PC-9 (cell line): ENCODE measurements at regions of chr10 and their contacts with region 1.

Region 1: DNA sequence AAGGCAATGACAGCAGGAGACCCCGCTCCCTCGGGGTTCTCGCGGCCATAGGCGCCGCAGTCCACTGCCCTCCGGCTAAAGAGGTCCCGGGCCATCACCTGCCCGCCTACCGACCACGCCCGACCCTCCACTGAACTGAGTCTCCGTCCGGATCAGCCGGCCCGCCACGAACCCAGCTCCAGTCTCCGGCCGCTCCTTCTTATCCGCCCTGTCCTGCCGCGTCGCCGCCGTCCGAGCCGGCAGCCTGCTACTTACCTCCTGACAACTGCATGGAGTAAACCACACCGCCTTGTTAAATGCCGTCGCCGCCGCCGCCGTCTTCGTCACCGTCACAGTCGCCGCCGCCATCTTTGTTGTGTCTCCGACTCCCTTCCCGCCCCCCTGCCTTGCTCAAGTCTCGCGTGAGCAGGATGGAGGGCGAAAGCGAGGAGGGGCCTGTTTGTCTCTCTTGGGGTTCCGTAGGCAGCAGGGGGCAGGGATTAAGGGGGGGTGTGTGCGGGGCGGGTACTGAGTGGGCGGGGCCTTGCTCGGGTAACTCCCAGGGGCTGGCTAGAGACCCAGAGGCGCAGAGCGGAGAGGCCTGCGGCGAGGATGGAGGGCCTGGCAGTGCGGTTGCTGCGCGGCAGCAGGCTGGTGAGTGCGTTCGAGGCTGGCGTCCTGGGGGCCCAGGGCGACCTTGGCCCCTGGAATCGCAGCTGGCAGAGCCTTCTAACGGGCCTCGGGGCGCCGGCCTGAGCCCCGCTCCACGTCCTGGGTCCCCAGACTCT is at the starts of genes ACADSB and IKZF5:
- DNase-seq: peak; percentile 84 to 85
- H3K4me3 ChIP-seq: peak within 1 kb of the TSS; percentile 89
- H3K27ac ChIP-seq: peak within 1 kb of the TSS; percentile 61
- H3K4me1 ChIP-seq: peaks cover 16% of the 10 kb centered on the region
- H3K27me3 ChIP-seq: no peaks in the 10 kb centered on the region
- CTCF ChIP-seq: no peak
- total RNA-seq, gene ACADSB: 7.3 and 12.8 TPM in 2 replicates
- total RNA-seq, gene IKZF5: 6.6 and 7.1 TPM in 2 replicates

Region 2: GRCh38 chr10:122252805-122253204 is 755.8 kb before region 1 on chr10:
- CTCF ChIA-PET with region 1: no interaction called
- POLR2A ChIA-PET with region 1: no interaction called
- intact Hi-C with region 1: no loop called
- DNase-seq: no peak
- H3K4me3 ChIP-seq: no peak overlapping the region
- H3K27ac ChIP-seq: no peak overlapping the region
- H3K4me1 ChIP-seq: no peaks in the 10 kb centered on the region
- H3K27me3 ChIP-seq: no peaks in the 10 kb centered on the region
- CTCF ChIP-seq: no peak

Region 3: DNA sequence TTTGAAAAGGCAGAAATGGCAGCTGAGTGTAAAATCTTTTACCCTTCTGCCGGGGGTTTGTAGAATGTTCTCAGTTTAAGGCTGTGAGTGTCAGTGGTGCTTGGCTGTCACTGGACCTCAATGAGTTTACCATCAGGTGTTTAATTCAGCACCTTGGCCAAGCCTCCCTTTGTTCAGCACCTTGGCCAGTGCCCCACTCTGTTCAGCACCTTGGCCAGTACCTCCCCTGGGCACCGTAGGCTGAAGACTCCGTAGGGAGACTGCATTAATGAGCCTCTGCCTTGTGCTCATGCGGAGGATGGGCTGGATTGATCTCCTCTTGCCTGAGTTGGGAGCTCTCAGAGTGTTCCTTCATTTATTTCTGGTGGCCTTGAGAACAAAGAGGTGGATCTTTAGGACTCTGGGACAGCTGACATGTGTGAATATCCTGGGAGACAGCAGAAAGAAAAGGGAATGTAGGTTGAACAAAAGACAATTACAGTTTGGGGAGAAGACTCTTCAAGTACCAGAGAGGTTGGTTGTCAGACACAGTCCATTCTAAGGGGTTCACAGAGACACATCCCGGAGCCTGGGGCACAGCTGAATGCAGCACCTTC is 96.6 kb before region 1 on chr10:
- CTCF ChIA-PET with region 1: no interaction called
- POLR2A ChIA-PET with region 1: no interaction called
- intact Hi-C with region 1: no loop called
- DNase-seq: peak in 1 of 2 experiments; percentile 52
- H3K4me3 ChIP-seq: no peak overlapping the region
- H3K27ac ChIP-seq: no peak overlapping the region
- H3K4me1 ChIP-seq: no peaks in the 10 kb centered on the region
- H3K27me3 ChIP-seq: peaks cover 14% of the 10 kb centered on the region
- CTCF ChIP-seq: no peak

Region 4: GRCh38 chr10:122953827-122954730 is 54.5 kb before region 1 on chr10 and contains the start of gene C10orf88:
- CTCF ChIA-PET with region 1: no interaction called
- POLR2A ChIA-PET with region 1: interaction called, 3 read pairs
- intact Hi-C with region 1: loop called (anchors 2 kb)
- DNase-seq: peak; percentile 86
- H3K4me3 ChIP-seq: peak within 1 kb of the TSS; percentile 71
- H3K27ac ChIP-seq: no peak within 1 kb of the TSS
- H3K4me1 ChIP-seq: no peaks in the 10 kb centered on the region
- H3K27me3 ChIP-seq: no peaks in the 10 kb centered on the region
- CTCF ChIP-seq: no peak
- total RNA-seq, gene C10orf88: 2.9 and 7.6 TPM in 2 replicates

Region 5: GRCh38 chr10:122980209-122981065 is 28.2 kb before region 1 on chr10 and contains the start of gene PSTK:
- CTCF ChIA-PET with region 1: no interaction called
- POLR2A ChIA-PET with region 1: no interaction called
- intact Hi-C with region 1: loop called (anchors 1 kb)
- DNase-seq: peak; percentile 70 to 78
- H3K4me3 ChIP-seq: peak within 1 kb of the TSS; percentile 69
- H3K27ac ChIP-seq: peak within 1 kb of the TSS; percentile 85
- H3K4me1 ChIP-seq: peaks cover 4% of the 10 kb centered on the region
- H3K27me3 ChIP-seq: no peaks in the 10 kb centered on the region
- CTCF ChIP-seq: peak; percentile 83
- total RNA-seq, gene PSTK: 3.2 and 3.4 TPM in 2 replicates

Region 6: DNA sequence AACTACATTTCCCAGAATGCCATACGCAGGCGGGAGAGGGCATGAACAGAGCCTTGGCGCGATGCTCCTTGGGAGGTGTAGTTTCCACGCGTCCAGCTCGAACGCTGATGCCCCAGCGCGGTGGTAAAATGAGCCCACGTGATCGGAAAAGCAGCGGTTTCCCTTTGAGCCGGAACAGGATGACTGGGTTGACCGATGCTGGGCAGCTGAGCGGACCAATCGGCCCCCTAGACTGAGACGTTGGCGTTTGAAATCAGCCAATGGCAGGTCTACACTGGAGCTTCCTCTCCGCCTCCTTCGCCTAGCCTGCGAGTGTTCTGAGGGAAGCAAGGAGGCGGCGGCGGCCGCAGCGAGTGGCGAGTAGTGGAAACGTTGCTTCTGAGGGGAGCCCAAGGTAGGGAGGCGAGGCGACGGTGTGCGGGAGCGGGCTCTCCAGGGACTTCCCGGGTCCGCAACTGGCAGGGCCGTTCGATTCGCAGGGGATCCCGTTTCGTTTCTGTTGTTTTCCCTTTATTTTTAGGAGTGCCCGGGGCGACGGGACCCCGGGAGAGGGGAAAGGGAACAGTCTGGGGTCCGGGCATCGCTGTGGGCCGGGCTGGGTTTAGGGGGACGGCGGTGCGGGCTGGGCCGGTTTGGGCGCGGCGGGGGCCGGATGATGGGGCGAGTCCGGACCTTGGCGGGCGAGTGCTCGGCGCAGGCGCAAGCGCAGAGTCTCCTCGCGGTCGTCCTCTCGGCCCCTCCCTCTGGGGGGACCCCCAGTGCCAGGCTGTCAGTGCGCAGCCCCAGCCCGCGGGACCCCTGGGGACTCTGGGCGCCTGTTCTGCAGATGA is 145.7 kb after region 1 on chr10 and contains the start of gene BUB3:
- CTCF ChIA-PET with region 1: no interaction called
- POLR2A ChIA-PET with region 1: interaction called, 4 read pairs
- intact Hi-C with region 1: loop called (anchors 10 kb)
- DNase-seq: peak; percentile 90 to 95
- H3K4me3 ChIP-seq: peak within 1 kb of the TSS; percentile 92
- H3K27ac ChIP-seq: peak within 1 kb of the TSS; percentile 57; the same call in 1 of the 2 replicates
- H3K4me1 ChIP-seq: peaks cover 20% of the 10 kb centered on the region
- H3K27me3 ChIP-seq: no peaks in the 10 kb centered on the region
- CTCF ChIP-seq: no peak
- total RNA-seq, gene BUB3: 96.5 and 112 TPM in 2 replicates